ENCODE measurements at regions of chr12 and their contacts with region 1.

Region 1: DNA sequence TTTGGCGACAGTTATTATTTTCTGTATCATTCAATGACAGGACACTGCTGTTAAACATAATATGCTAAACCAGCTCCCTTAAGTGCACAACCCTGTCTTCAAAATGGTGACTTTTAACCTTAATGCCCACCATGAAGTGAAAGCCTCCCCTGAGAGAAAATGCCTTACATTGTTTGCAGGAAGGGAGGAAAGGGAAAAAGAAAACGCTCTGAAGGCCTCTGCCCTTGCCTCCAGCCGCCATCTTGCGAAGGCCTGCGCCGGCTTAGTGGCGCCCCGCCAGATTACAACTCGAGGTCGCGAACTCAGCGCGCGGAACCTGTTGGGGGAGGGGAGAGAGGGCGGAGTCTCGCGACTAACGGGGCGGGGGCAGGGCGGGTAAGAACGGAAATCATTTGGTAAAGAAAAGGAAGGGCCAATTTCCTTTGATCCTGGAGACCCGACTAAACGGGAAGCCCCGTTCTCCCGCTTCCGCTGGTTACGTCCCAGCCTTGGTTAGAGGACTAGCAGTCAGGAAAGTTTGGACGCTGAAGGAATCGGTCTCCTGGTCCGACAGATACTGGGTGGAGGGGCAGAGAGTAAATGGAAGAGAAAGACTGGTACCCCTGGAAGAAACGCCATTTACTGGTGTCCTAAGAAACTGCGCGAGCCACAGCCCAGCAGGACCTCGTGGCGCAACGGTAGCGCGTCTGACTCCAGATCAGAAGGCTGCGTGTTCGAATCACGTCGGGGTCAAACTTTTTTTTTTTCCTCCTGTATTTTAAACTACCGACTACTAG is 11.6 kb upstream of the TMPO start:
- DNase-seq: peak; percentile 97
- H3K4me3 ChIP-seq: peak overlapping the region; percentile 53 to 66 (median 59)
- H3K27ac ChIP-seq: peak overlapping the region; percentile 91 to 97 (median 94)
- H3K4me1 ChIP-seq: peaks cover 0 to 10% (median 4%) of the 10 kb centered on the region in 4 donors
- H3K27me3 ChIP-seq: no peaks in the 10 kb centered on the region
- CTCF ChIP-seq: no peak
- EP300 ChIP-seq: no peak
- POLR2A ChIP-seq: peak in 1 of 2 donors; percentile 41

Region 2: GRCh38 chr12:98388126-98388525 is 115.7 kb before region 1 on chr12:
- intact Hi-C with region 1: no loop called
- DNase-seq: no peak
- H3K4me3 ChIP-seq: no peak overlapping the region
- H3K27ac ChIP-seq: no peak overlapping the region
- H3K4me1 ChIP-seq: no peaks in the 10 kb centered on the region
- H3K27me3 ChIP-seq: no peaks in the 10 kb centered on the region
- CTCF ChIP-seq: no peak
- EP300 ChIP-seq: no peak
- POLR2A ChIP-seq: no peak

Region 3: DNA sequence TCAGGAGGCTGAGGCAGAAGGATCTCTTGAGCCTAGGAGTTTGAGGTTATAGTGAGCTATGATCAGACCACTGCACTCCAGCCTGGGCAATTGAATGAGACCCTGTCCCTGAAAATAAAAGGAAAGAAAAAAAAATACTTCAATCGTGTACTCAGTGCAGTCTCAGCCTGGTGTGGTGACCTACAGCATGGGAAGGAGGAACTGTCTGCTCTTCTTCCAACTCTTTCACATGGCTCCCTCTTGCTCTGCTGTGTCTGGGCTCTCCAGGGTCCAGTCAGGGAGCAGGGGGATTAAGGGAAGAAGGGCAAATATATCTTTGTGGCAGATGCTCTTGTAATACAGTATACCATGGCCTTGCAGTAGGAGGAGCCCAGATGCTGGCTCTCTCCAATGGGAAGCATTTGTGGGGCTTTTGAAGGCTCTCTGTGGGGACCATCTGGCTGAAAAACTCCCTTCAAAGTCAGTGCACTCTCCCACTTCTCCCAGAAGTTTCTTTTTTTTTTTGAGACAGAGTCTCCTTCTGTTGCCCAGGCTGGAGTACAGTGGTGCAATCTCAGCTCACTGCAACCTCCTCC is 65.0 kb before region 1 on chr12:
- intact Hi-C with region 1: no loop called
- DNase-seq: no peak
- H3K4me3 ChIP-seq: no peak overlapping the region
- H3K27ac ChIP-seq: peak overlapping the region in 1 of 4 donors; percentile 57
- H3K4me1 ChIP-seq: peaks cover 0 to 9% (median 3%) of the 10 kb centered on the region in 4 donors
- H3K27me3 ChIP-seq: no peaks in the 10 kb centered on the region
- CTCF ChIP-seq: no peak
- EP300 ChIP-seq: no peak
- POLR2A ChIP-seq: no peak

Region 4: DNA sequence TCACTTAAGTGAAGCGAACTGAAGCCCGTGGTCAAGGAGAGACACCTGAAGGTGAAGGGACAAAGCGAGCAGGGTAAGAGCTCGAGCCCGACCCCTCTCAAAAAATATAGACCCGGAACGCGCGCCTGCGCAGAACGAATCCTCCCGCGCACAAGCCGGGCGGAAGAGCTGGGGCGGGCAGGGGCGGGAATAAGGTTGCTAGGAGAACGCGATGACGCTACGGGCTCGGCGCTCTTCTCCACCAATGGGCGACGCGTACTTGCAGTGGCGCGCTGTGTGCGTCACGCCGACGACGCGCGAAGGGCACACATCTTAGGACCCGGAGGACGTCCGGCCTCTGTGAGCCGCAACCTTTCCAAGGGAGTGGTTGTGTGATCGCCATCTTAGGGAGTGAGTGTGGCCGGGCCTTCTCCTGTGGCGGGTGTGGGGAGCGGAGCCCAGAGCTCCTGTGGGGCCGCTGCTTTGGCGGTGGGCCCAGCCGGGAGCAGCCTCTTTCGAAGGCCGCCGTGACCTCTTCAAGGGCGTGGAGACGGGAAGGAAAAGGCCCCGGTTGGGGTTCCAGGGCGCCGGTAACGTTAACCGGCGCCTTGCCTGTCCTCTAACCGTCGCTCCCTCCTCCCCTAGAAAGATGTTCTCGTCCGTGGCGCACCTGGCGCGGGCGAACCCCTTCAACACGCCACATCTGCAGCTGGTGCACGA is 89.7 kb after region 1 on chr12 and contains the start of gene SLC25A3:
- intact Hi-C with region 1: loop called (anchors 1 kb)
- DNase-seq: peak; percentile 98
- H3K4me3 ChIP-seq: peak within 1 kb of the TSS; percentile 76 to 98 (median 88)
- H3K27ac ChIP-seq: peak within 1 kb of the TSS; percentile 94 to 100 (median 96)
- H3K4me1 ChIP-seq: peaks cover 0 to 40% (median 30%) of the 10 kb centered on the region in 4 donors
- H3K27me3 ChIP-seq: no peaks in the 10 kb centered on the region
- CTCF ChIP-seq: no peak
- EP300 ChIP-seq: peak in 1 of 4 donors; percentile 6
- POLR2A ChIP-seq: peak; percentile 96 to 97
- total RNA-seq, gene SLC25A3: 525 to 641 (median 599) TPM

Measured in sigmoid colon (tissue), 7 donors.